Heart left ventricle (tissue), 16 donors: ENCODE measurements at regions of chr6 and their contacts with region 1.

Region 1: GRCh38 chr6:593139-593906 is 63.6 kb downstream of the HUS1B start:
- DNase-seq: peak in 3 of 5 donors; percentile 41 to 51 (median 44)
- ATAC-seq: no peak
- H3K4me3 ChIP-seq: no peak overlapping the region
- H3K27ac ChIP-seq: peak overlapping the region in 1 of 12 donors; percentile 45
- H3K4me1 ChIP-seq: peaks cover 0 to 3% (median 0%) of the 10 kb centered on the region in 12 donors
- H3K27me3 ChIP-seq: no peaks in the 10 kb centered on the region
- CTCF ChIP-seq: peak; percentile 67 to 82 (median 75)
- POLR2A ChIP-seq: no peak

Region 2: GRCh38 chr6:722077-722524 is 128.8 kb after region 1 on chr6:
- intact Hi-C with region 1: loop called in 3 of 10 experiments (anchors 5 to 10 kb)
- DNase-seq: peak; percentile 57 to 83 (median 66)
- ATAC-seq: peak in 3 of 4 donors; percentile 62 to 70 (median 64)
- H3K4me3 ChIP-seq: no peak overlapping the region
- H3K27ac ChIP-seq: no peak overlapping the region
- H3K4me1 ChIP-seq: peaks cover 0 to 9% (median 0%) of the 10 kb centered on the region in 12 donors
- H3K27me3 ChIP-seq: peaks cover 0 to 4% (median 0%) of the 10 kb centered on the region in 9 donors
- CTCF ChIP-seq: peak; percentile 79 to 97 (median 92)
- POLR2A ChIP-seq: no peak

Region 3: DNA sequence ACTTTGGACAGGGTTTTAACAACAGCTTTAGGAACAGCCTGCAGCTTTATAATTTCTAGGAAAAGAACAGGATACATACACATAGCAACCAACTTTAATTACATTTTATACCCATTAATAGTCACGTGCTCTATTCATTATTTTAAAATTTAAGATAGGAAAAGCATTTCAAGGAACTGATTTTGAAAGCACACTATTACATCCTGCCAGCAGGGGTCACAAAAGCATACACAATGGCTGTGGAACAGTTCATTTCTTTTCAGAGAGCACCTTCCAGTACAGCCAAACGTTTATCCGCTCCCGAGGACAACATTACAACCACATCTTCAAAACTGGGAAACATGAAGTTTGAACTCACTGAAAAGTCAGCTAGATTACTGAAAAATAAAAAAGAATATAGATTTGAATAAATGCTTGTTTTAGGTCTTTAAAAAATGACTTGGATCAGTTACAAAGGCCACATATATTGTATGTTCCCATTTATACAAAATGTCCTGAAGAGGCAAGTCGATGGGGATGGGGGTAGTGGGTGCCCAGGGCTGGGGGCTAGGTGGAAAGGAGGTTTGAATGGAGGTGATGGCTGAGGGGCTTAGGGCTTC is 204.3 kb after region 1 on chr6:
- intact Hi-C with region 1: loop called in 1 of 10 experiments (anchors 5 kb)
- DNase-seq: peak in 2 of 5 donors; percentile 23 to 32
- ATAC-seq: peak in 2 of 4 donors; percentile 53 to 65
- H3K4me3 ChIP-seq: no peak overlapping the region
- H3K27ac ChIP-seq: no peak overlapping the region
- H3K4me1 ChIP-seq: no peaks in the 10 kb centered on the region
- H3K27me3 ChIP-seq: peaks cover 0 to 82% (median 39%) of the 10 kb centered on the region in 9 donors
- CTCF ChIP-seq: peak; percentile 63 to 88 (median 80)
- POLR2A ChIP-seq: no peak

Region 4: DNA sequence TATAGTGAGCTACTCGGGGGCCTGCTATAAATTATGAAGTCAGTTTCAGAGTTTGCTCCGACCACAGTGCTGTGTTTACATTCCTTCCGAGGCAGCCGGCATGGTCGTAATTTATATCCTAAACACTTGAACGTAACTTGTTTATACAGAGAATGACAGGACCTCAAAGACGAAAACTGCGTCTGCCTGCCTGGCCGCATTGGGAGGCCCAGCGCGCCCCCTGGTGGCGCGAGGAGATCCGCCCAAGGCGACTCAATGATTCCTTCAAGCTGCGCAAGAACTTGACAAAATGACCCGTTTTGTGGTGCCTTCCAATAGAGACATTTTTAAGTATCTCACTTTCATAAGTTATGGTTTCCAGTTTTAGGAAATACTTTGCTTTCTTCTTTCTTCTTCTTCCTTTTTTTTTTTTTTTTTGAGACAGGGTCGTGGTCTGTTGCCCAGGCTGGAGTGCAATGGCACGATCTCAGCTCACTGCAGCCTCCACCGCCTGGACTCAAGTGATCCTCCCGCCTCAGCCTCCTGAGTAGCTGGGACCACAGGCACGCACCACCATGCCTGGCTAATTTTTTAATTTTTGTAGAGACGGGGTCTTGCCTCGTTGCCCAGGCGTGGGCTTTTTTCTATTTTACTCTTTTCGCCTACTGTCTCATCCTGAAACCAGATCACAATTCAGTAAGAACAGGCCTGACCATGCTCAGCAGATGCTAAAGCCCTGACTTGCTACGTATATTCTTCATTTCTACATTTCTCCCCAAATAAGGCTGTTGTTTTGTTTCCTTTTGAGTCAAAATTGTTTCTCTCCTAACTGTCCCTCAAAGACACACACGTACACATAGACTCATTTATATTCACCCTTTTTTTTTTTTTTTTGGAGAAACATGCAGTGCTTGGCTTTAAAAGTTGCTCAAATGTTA is 803.9 kb after region 1 on chr6:
- intact Hi-C with region 1: loop called in 8 of 10 experiments (anchors 2 to 10 kb)
- DNase-seq: peak in 4 of 5 donors; percentile 34 to 72 (median 56)
- ATAC-seq: peak in 2 of 4 donors; percentile 66 to 68
- H3K4me3 ChIP-seq: no peak overlapping the region
- H3K27ac ChIP-seq: no peak overlapping the region
- H3K4me1 ChIP-seq: peaks cover 0 to 19% (median 5%) of the 10 kb centered on the region in 12 donors
- H3K27me3 ChIP-seq: peaks cover 18 to 98% (median 75%) of the 10 kb centered on the region in 9 donors
- CTCF ChIP-seq: peak; percentile 84 to 97 (median 95)
- POLR2A ChIP-seq: no peak